ENCODE measurements at regions of chr1 and their contacts with region 1.

Region 1: GRCh38 chr1:89605692-89606091 is 27.2 kb upstream of the LRRC8C start:
- DNase-seq: no peak
- H3K4me3 ChIP-seq: no peak overlapping the region
- H3K27ac ChIP-seq: no peak overlapping the region
- H3K4me1 ChIP-seq: peaks cover 3 to 20% of the 10 kb centered on the region in 2 experiments; a peak in 3 of 4 replicates
- H3K27me3 ChIP-seq: no peaks in the 10 kb centered on the region
- CTCF ChIP-seq: no peak
- EP300 ChIP-seq: peak in 1 of 2 experiments; percentile 36; a peak in 1 of 4 replicates
- RAD21 ChIP-seq: no peak

Region 2: DNA sequence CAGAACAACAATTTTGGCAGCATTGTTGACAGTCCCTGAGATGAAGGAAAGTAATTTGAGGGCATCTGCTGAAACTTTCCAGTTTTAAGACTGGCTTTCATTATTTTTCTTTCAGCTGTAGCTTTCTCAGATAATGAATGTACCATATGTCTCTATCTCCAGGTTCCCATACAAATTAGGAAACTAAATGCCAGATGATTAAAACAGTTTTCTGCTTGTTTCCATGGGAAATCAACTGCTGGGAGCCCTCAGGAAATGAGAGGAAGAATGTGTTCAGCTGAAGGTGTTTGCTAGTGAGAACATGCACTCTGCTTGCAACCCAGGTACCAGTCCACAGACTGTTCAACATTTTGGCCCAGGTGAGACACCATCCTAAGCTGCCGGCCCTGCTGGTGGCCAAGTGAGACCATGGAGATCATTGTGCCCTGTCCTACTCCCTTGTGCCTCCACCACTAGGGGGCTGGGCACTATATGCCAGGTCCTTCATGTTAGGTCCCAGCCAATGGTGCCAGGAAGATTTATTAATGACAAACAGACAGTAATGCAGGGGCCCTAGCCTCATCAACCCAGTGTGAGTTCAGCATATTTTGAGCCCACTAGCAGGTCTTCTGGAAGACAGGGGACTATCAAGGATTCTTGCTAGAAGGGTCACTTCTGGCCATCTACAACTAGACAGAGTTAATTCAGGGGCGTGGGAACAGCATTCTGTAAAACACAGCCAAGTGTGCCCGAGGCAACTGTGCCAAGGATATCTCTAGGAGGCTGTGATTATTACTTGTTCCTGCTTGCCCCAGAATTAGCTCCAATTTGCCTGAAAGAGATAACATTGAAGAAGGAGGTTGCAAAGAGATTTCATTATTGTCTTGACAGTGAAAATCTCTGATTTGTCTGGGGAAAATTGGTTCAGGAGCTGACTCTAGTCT is 10.2 kb after region 1 on chr1:
- CTCF ChIA-PET with region 1: interaction called, 43 read pairs
- POLR2A ChIA-PET with region 1: no interaction called
- DNase-seq: peak; percentile 63
- H3K4me3 ChIP-seq: no peak overlapping the region
- H3K27ac ChIP-seq: peak overlapping the region in 1 of 2 experiments; percentile 77; a peak in 2 of 4 replicates
- H3K4me1 ChIP-seq: peaks cover 0 to 13% of the 10 kb centered on the region in 2 experiments; a peak in 1 of 4 replicates
- H3K27me3 ChIP-seq: no peaks in the 10 kb centered on the region
- CTCF ChIP-seq: peak; percentile 49
- EP300 ChIP-seq: no peak; a peak in 1 of 4 replicates
- RAD21 ChIP-seq: peak; percentile 17

Region 3: GRCh38 chr1:89632657-89633247 is 27.1 kb after region 1 on chr1 and contains the start of gene LRRC8C:
- CTCF ChIA-PET with region 1: interaction called, 11 read pairs
- POLR2A ChIA-PET with region 1: no interaction called
- DNase-seq: peak; percentile 95
- H3K4me3 ChIP-seq: peak within 1 kb of the TSS; percentile 95
- H3K27ac ChIP-seq: peak within 1 kb of the TSS; percentile 66 to 88
- H3K4me1 ChIP-seq: peaks cover 12% of the 10 kb centered on the region in 2 experiments
- H3K27me3 ChIP-seq: no peaks in the 10 kb centered on the region
- CTCF ChIP-seq: peak; percentile 27
- EP300 ChIP-seq: no peak
- RAD21 ChIP-seq: peak; percentile 63
- polyA plus RNA-seq, gene LRRC8C: 4.2 and 5.2 TPM in 2 replicates